ENCODE measurements at regions of chr6 and their contacts with region 1.

Region 1: GRCh38 chr6:143279385-143279784 is 171.1 kb downstream of the ADAT2 start:
- DNase-seq: no peak
- H3K4me3 ChIP-seq: no peak overlapping the region
- H3K27ac ChIP-seq: no peak overlapping the region
- H3K4me1 ChIP-seq: no peaks in the 10 kb centered on the region
- H3K27me3 ChIP-seq: no peaks in the 10 kb centered on the region
- CTCF ChIP-seq: peak; percentile 46 to 63 (median 56)
- EP300 ChIP-seq: no peak
- POLR2A ChIP-seq: no peak
- RAD21 ChIP-seq: peak; percentile 74 to 81

Region 2: DNA sequence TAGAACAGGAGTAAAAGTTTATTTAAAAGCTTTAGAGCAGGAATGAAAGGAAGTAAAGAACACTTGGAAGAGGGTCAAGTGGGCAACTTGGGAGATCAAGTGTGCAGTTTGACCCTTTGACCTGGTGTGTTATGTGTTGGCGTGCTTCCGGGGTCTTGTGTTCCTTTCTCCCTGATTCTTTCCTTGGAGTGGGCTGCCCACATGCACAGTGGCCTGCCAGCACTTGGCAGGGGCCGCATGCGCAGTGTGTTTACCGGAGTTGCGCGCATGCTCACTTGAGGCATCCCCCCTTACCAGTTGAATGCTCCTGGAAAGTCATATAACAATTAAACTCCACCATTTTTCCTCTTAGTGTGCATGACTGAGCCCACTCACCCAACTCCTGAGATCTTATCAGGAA is 10.8 kb after region 1 on chr6:
- CTCF ChIA-PET with region 1: interaction called, 15 read pairs
- POLR2A ChIA-PET with region 1: no interaction called
- DNase-seq: no peak
- H3K4me3 ChIP-seq: no peak overlapping the region
- H3K27ac ChIP-seq: no peak overlapping the region
- H3K4me1 ChIP-seq: peaks cover 0 to 10% (median 4%) of the 10 kb centered on the region in 4 experiments; a peak in 5 of 7 replicates
- H3K27me3 ChIP-seq: no peaks in the 10 kb centered on the region
- CTCF ChIP-seq: no peak
- EP300 ChIP-seq: no peak
- POLR2A ChIP-seq: no peak
- RAD21 ChIP-seq: no peak

Region 3: GRCh38 chr6:143299253-143300166 is 20.1 kb after region 1 on chr6:
- CTCF ChIA-PET with region 1: interaction called, 16 read pairs
- POLR2A ChIA-PET with region 1: no interaction called
- DNase-seq: no peak
- H3K4me3 ChIP-seq: no peak overlapping the region
- H3K27ac ChIP-seq: no peak overlapping the region
- H3K4me1 ChIP-seq: peaks cover 0 to 3% (median 0%) of the 10 kb centered on the region in 4 experiments; a peak in 1 of 7 replicates
- H3K27me3 ChIP-seq: no peaks in the 10 kb centered on the region
- CTCF ChIP-seq: peak in 1 of 3 experiments; percentile 17; a peak in 1 of 4 replicates
- EP300 ChIP-seq: no peak
- POLR2A ChIP-seq: no peak
- RAD21 ChIP-seq: no peak

Region 4: GRCh38 chr6:143408151-143408786 is 128.9 kb after region 1 on chr6:
- CTCF ChIA-PET with region 1: no interaction called
- POLR2A ChIA-PET with region 1: no interaction called
- DNase-seq: no peak
- H3K4me3 ChIP-seq: no peak overlapping the region
- H3K27ac ChIP-seq: no peak overlapping the region
- H3K4me1 ChIP-seq: no peaks in the 10 kb centered on the region; a peak in 2 of 7 replicates
- H3K27me3 ChIP-seq: no peaks in the 10 kb centered on the region
- CTCF ChIP-seq: no peak
- EP300 ChIP-seq: no peak
- POLR2A ChIP-seq: no peak
- RAD21 ChIP-seq: no peak

Measured in H1 (cell line).